ENCODE measurements at regions of chr19 and their contacts with region 1.

Region 1: DNA sequence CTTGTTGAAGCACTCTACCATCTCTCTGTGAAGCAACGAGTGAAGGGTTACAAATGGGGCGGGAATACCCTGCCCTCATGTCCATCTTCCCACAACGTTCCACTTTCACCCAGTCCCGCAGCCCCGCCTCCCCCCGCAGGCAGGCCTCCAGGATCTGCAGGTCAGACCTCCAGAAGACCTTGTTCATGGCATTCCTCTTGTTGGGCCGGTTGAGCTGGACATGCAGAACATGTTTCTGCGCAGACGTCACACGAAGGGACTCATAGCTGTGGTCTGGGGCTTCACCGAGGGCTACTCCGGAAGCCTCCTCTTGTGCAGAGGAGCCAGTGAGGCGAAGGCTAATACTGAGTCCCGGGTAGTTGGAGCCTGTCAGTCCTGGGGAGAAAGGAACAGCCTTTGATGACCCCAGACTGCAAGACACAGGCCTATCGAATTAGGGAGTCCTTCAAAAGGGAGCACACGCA is 420 bp downstream of the ECH1 start:
- DNase-seq: peak; percentile 84
- H3K4me3 ChIP-seq: peak overlapping the region; percentile 56 to 78 (median 69)
- H3K27ac ChIP-seq: peak overlapping the region; percentile 95 to 99 (median 96)
- H3K4me1 ChIP-seq: peaks cover 27 to 61% (median 32%) of the 10 kb centered on the region in 4 donors
- H3K27me3 ChIP-seq: no peaks in the 10 kb centered on the region
- CTCF ChIP-seq: no peak
- EP300 ChIP-seq: no peak
- POLR2A ChIP-seq: no peak

Region 2: GRCh38 chr19:38658462-38659306 is 172.5 kb before region 1 on chr19:
- in situ Hi-C with region 1: no loop called
- intact Hi-C with region 1: loop called (anchors 10 kb)
- DNase-seq: peak; percentile 56
- H3K4me3 ChIP-seq: no peak overlapping the region
- H3K27ac ChIP-seq: peak overlapping the region; percentile 99 to 100 (median 99)
- H3K4me1 ChIP-seq: peaks cover 96 to 100% (median 99%) of the 10 kb centered on the region in 4 donors
- H3K27me3 ChIP-seq: no peaks in the 10 kb centered on the region
- CTCF ChIP-seq: no peak
- EP300 ChIP-seq: no peak
- POLR2A ChIP-seq: peak; percentile 41

Region 3: DNA sequence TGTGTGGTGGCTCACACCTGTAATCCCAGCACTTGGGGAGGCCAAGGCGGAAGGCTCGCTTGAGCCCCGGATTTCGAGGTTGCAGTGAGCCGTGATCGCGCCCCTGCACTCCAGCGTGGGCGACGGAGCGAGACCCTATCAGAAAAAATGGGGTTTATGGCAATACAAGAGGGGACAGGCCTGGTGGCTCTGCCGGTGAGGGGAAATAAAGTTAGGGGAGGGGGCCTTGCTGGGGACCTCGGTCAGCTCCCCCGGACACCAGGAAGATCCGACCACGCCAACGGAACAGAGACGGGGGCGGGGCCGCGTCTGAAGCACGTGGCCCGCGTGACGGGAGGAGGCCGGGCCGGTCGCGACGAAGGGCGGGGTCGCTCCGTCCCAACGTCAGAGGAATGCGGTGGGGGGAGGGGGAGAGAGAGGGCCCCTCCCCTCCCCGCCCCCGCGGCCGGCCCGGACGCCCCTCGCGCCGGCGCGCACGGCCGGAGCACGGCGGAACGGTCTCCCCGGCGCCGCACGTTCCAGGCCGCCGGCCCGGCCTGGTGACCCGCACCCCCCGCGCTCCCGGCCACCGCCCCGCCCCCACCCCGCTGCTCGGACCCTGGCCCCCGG is 20.6 kb after region 1 on chr19:
- in situ Hi-C with region 1: no loop called
- intact Hi-C with region 1: loop called (anchors 1 kb)
- DNase-seq: peak; percentile 97
- H3K4me3 ChIP-seq: peak overlapping the region; percentile 69 to 90 (median 88)
- H3K27ac ChIP-seq: peak overlapping the region; percentile 98 to 100 (median 100)
- H3K4me1 ChIP-seq: peaks cover 15 to 38% (median 29%) of the 10 kb centered on the region in 4 donors
- H3K27me3 ChIP-seq: no peaks in the 10 kb centered on the region
- CTCF ChIP-seq: no peak
- EP300 ChIP-seq: peak; percentile 53
- POLR2A ChIP-seq: peak; percentile 88

Measured in transverse colon (tissue), 4 donors.